ENCODE measurements at regions of chr13 and their contacts with region 1.

Region 1: DNA sequence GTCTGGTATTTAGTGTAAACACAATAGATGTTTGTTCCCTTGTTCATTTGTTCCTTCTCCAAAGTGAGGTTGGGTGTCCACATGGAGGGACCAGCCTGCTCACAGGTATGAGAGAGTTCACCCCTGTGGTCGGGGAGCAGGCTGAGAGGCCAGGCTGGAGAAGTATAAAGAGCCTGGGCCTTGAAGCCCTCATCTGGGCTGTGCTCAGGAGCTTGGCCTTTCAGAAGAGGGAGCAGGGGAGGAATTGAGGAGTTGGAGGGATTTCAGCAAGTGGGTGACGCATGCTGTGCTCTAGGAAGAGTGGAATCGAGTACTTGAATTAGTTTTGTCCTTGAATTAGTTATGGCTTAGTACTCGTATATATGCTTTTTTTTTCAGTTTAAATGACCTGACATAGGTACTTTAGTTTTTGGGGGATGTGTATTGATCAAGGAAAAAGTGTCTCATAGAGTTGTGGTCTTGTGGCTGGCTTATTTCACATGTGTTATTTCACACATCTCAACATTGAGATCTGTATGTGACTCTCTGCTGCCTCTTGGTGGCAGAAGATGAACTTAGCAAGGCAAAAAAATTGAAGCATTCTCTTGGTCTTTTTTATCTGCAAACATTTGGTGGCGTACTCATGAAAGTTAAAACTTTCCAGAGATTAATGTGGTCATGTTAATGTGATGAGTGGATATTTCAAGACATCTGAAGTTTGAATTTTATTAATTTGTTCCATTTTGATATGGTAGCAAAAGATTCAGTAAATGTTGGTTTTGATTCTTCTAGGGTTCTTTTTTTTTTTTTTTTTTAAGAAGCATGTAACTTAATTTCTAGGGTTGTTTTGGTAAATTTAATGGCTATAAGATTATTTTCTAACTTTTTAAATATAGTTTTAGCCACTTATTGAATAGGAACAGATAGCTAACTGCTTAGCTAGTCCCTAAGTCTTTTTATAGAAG is 54.3 kb downstream of the SLAIN1 start:
- DNase-seq: no peak
- H3K4me3 ChIP-seq: no peak overlapping the region
- H3K27ac ChIP-seq: no peak overlapping the region
- H3K4me1 ChIP-seq: peaks cover 9% of the 10 kb centered on the region
- H3K27me3 ChIP-seq: no peaks in the 10 kb centered on the region
- CTCF ChIP-seq: peak; percentile 81

Region 2: DNA sequence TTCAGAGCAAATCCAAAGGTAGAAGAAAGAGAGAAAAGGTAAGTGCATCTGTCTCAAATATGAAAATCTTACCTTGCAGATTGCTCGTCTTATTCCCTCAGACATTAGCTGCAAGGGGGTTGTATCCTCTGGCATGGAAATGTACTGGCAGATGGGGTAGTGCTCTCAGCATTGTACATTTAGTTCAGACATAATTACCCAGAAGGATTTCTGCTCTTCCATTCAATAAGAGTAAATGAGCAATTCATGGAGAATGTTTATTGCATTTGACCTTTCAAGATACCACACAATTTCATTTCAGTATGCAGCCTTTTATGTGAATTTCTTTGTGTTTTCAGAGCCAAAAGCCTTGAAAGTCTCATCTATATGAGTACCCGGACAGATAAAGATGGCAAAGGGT is 152.4 kb before region 1 on chr13:
- intact Hi-C with region 1: loop called (anchors 10 kb)
- DNase-seq: no peak
- H3K4me3 ChIP-seq: no peak overlapping the region
- H3K27ac ChIP-seq: no peak overlapping the region
- H3K4me1 ChIP-seq: no peaks in the 10 kb centered on the region
- H3K27me3 ChIP-seq: peaks cover 14% of the 10 kb centered on the region
- CTCF ChIP-seq: no peak

Region 3: GRCh38 chr13:78087966-78088678 is 336.3 kb after region 1 on chr13:
- intact Hi-C with region 1: no loop called
- DNase-seq: no peak
- H3K4me3 ChIP-seq: no peak overlapping the region
- H3K27ac ChIP-seq: no peak overlapping the region
- H3K4me1 ChIP-seq: no peaks in the 10 kb centered on the region
- H3K27me3 ChIP-seq: no peaks in the 10 kb centered on the region
- CTCF ChIP-seq: no peak

Region 4: DNA sequence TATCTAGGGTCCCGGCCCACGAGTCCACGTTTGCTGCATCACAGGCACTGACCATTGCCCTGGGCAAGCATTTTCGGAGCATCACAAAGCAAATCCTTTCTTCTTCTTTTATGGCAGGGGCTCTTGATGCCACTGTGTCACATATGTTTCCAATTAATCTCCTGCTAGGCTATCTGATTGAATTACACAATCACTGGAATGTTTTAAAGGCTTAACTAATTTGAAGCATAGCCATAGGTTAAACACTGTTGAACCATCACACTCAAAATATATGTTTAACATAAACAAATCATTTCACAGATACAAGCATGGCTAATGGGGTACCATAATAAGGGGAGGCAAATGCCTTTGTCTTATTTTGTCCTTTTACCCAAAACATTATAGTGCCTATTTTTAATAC is 513.3 kb after region 1 on chr13:
- intact Hi-C with region 1: no loop called
- DNase-seq: no peak
- H3K4me3 ChIP-seq: no peak overlapping the region
- H3K27ac ChIP-seq: no peak overlapping the region
- H3K4me1 ChIP-seq: no peaks in the 10 kb centered on the region
- H3K27me3 ChIP-seq: no peaks in the 10 kb centered on the region
- CTCF ChIP-seq: no peak

Measured in left ventricle myocardium inferior (tissue), 1 donor.